ENCODE measurements at regions of chr17 and their contacts with region 1.

Region 1: DNA sequence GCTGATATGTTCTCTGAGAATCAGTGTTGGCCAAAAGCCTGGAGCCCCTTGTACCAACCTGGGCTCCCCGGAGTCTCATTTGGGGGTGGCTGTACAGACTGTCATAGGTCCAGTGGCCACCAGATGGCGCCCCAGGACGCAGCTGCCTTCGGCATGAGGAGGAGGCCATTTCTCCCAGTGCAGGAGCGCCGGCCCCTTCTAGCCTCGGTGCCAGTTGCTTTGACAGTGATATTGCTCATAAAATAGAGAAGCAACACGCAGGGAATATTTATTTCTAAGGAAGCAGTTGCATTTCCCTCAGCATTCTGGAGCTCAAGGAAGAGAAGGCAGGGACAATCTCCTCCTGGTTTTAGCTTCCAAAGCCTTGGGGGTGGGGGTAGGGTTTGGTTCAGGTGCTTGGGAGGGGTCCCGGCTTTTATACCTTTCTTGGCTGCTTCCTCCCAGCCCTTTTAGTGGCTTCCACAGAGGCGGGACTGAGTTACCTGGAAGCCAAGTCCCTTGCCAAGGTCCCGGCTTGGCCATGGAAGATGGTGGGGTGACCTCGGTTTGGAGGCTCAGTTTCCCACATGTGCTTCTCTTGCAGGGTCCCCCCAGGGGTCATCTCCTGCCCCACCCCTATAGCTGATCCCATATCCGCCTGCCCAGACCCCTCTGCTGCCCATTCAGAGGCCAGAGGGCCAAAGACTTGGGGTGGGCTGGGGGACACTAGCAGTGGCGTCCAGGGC is 117.8 kb upstream of the CDC42EP4 start:
- DNase-seq: peak; percentile 92
- ATAC-seq: peak; percentile 91

Region 2: GRCh38 chr17:73379826-73380225 is 49.8 kb before region 1 on chr17:
- intact Hi-C with region 1: no loop called
- DNase-seq: peak; percentile 45
- ATAC-seq: no peak

Region 3: DNA sequence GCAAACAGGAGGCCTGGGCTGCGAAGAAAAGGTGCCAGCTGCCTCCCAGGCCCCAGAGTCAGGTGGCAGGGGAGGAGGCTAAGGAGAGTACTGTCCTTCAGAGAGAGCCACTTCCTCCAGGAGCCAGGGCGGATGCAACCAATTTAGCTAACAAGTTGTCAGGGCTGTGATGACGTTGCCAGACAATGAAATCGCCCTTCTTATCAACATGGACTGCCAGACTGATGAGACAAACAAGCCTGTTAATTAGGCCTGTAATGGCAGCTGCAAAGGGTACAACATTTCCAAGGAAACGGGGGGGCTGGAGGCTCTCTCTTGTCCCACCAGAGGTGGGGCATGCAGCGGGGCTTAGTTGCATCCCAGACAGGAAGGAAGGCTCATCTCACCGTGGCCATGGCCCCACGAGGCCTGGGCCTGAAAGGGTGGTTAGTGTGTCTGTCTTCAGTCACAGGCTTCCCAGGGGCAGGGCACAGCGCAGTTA is 102.9 kb after region 1 on chr17:
- intact Hi-C with region 1: loop called (anchors 1 kb)
- DNase-seq: peak; percentile 45
- ATAC-seq: no peak

Region 4: DNA sequence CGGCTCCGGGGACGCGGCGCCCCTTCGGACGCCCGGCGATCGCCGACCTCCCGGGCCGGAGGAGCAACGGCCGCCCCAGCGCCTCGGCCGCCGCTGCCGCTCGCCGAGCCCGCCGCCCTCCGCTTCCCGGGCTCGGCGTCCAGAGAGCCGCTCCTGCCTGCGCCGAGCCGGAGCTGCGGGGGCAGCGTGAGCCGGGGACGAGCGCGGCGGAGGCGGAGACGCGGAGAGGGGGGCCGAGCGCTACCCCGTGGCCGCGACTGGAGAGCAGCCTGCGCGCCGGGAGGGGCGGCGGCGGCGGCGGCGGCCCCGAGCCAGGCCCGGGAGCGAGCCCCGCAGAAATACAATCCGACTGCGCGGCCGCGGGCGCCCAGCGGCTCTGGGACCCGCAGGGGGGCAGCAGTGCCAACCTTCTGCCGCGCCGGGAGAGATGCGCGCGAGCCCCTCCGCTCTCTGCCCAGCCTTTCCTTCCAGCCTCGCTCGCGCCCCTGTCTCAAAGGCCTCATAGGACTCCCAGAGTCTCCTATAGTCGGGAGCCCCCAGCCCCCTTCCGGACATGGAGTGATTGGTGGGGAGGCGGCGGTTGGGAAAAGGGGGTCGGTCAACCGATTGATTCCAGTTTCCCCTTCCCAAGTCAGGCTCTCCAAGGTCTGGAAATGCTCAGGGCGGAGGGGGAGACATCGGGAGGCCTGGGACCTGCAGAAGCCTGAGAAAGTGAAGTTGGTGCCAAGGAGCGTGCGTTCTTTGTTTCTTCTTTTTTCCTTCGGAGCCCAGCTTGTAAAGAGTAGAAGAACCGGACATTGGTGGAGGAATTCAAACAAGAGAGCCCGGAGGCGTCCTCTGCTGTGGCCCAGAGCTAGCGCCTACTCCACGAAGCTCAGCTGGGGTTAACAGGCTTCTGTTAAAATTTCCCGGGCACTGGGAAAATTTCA is 215.7 kb after region 1 on chr17:
- intact Hi-C with region 1: loop called (anchors 5 kb)
- DNase-seq: no peak
- ATAC-seq: peak; percentile 81

Region 5: GRCh38 chr17:73956669-73957465 is 527.3 kb after region 1 on chr17:
- intact Hi-C with region 1: loop called (anchors 10 kb)
- DNase-seq: no peak
- ATAC-seq: no peak

Measured in Right ventricle myocardium inferior (tissue), 1 donor.